Naive thymus-derived CD4-positive, alpha-beta T cell (primary cell): ENCODE measurements at regions of chr11 and their contacts with region 1.

Region 1: GRCh38 chr11:81869351-81870065 is 864.2 kb downstream of the FAM181B start:
- DNase-seq: peak in 8 of 9 donors; percentile 84 to 94 (median 92)
- ATAC-seq: peak; percentile 94
- H3K4me3 ChIP-seq: peak overlapping the region; percentile 48
- H3K4me3 Mint-ChIP-seq: peak overlapping the region; percentile 66 to 94 (median 78)
- H3K27ac ChIP-seq: peak overlapping the region; percentile 1
- H3K27ac Mint-ChIP-seq: peak overlapping the region; percentile 9 to 96 (median 92)
- H3K4me1 ChIP-seq: peaks cover 27 to 32% of the 10 kb centered on the region in 2 donors
- H3K4me1 Mint-ChIP-seq: peaks cover 35 to 70% (median 57%) of the 10 kb centered on the region in 7 donors
- H3K27me3 ChIP-seq: no peaks in the 10 kb centered on the region
- H3K27me3 Mint-ChIP-seq: peaks cover 0 to 24% (median 0%) of the 10 kb centered on the region in 5 donors

Region 2: GRCh38 chr11:81052344-81053158 is 817.0 kb before region 1 on chr11:
- CTCF ChIA-PET with region 1: no interaction called
- POLR2A ChIA-PET with region 1: no interaction called
- intact Hi-C with region 1: no loop called
- DNase-seq: no peak
- ATAC-seq: no peak
- H3K4me3 ChIP-seq: no peak overlapping the region
- H3K4me3 Mint-ChIP-seq: no peak overlapping the region
- H3K27ac ChIP-seq: no peak overlapping the region
- H3K27ac Mint-ChIP-seq: no peak overlapping the region
- H3K4me1 ChIP-seq: no peaks in the 10 kb centered on the region
- H3K4me1 Mint-ChIP-seq: no peaks in the 10 kb centered on the region
- H3K27me3 ChIP-seq: no peaks in the 10 kb centered on the region
- H3K27me3 Mint-ChIP-seq: no peaks in the 10 kb centered on the region

Region 3: DNA sequence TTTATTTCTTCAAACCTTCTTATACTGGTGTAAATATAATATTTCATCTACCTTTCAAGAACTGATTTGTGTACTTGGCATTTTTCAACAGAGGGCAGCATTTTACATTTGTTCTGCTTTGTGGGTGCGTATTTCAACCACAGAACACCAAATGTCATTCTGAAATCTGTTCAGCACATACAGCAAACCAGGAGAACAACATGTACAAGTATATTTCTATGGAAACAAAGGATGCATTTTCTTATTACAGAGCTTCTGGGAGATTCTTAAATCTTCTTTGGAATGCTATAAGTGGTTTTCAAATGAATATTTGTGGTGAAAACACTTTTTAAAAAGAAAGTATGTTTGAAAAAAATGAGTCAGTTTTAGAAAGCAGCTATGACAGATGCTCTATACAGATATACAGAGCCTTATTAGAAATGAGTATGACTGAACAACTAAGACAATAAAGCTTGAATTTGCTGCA is 81.9 kb before region 1 on chr11:
- CTCF ChIA-PET with region 1: no interaction called
- POLR2A ChIA-PET with region 1: no interaction called
- intact Hi-C with region 1: loop called (anchors 1 kb)
- DNase-seq: peak in 7 of 9 donors; percentile 11 to 54 (median 46)
- ATAC-seq: peak; percentile 48
- H3K4me3 ChIP-seq: no peak overlapping the region
- H3K4me3 Mint-ChIP-seq: no peak overlapping the region
- H3K27ac ChIP-seq: no peak overlapping the region
- H3K27ac Mint-ChIP-seq: peak overlapping the region in 1 of 9 donors; percentile 51
- H3K4me1 ChIP-seq: peaks cover 0 to 7% of the 10 kb centered on the region in 2 donors
- H3K4me1 Mint-ChIP-seq: peaks cover under 1 to 16% (median 9%) of the 10 kb centered on the region in 7 donors
- H3K27me3 ChIP-seq: no peaks in the 10 kb centered on the region
- H3K27me3 Mint-ChIP-seq: no peaks in the 10 kb centered on the region

Region 4: GRCh38 chr11:81857386-81857785 is 12.1 kb before region 1 on chr11:
- CTCF ChIA-PET with region 1: interaction called, 3 read pairs
- POLR2A ChIA-PET with region 1: no interaction called
- intact Hi-C with region 1: loop called in 1 of 2 experiments (anchors 1 kb)
- DNase-seq: no peak
- ATAC-seq: no peak
- H3K4me3 ChIP-seq: no peak overlapping the region
- H3K4me3 Mint-ChIP-seq: no peak overlapping the region
- H3K27ac ChIP-seq: no peak overlapping the region
- H3K27ac Mint-ChIP-seq: no peak overlapping the region
- H3K4me1 ChIP-seq: no peaks in the 10 kb centered on the region
- H3K4me1 Mint-ChIP-seq: peaks cover 0 to 10% (median 3%) of the 10 kb centered on the region in 7 donors
- H3K27me3 ChIP-seq: no peaks in the 10 kb centered on the region
- H3K27me3 Mint-ChIP-seq: peaks cover 0 to 12% (median 0%) of the 10 kb centered on the region in 5 donors

Region 5: GRCh38 chr11:81963018-81963417 is 93.5 kb after region 1 on chr11:
- CTCF ChIA-PET with region 1: no interaction called
- POLR2A ChIA-PET with region 1: no interaction called
- intact Hi-C with region 1: loop called (anchors 1 to 2 kb)
- DNase-seq: peak in 3 of 9 donors; percentile 4 to 10 (median 5)
- ATAC-seq: no peak
- H3K4me3 ChIP-seq: no peak overlapping the region
- H3K4me3 Mint-ChIP-seq: peak overlapping the region in 6 of 10 donors; percentile 37 to 62 (median 45)
- H3K27ac ChIP-seq: no peak overlapping the region
- H3K27ac Mint-ChIP-seq: no peak overlapping the region
- H3K4me1 ChIP-seq: peaks cover 0 to 8% of the 10 kb centered on the region in 2 donors
- H3K4me1 Mint-ChIP-seq: peaks cover 0 to 22% (median 16%) of the 10 kb centered on the region in 7 donors
- H3K27me3 ChIP-seq: no peaks in the 10 kb centered on the region
- H3K27me3 Mint-ChIP-seq: peaks cover 0 to 3% (median 0%) of the 10 kb centered on the region in 5 donors

Region 6: GRCh38 chr11:82239498-82239897 is 370.0 kb after region 1 on chr11:
- CTCF ChIA-PET with region 1: no interaction called
- POLR2A ChIA-PET with region 1: no interaction called
- intact Hi-C with region 1: loop called in 1 of 2 experiments (anchors 5 kb)
- DNase-seq: no peak
- ATAC-seq: no peak
- H3K4me3 ChIP-seq: no peak overlapping the region
- H3K4me3 Mint-ChIP-seq: no peak overlapping the region
- H3K27ac ChIP-seq: no peak overlapping the region
- H3K27ac Mint-ChIP-seq: no peak overlapping the region
- H3K4me1 ChIP-seq: no peaks in the 10 kb centered on the region
- H3K4me1 Mint-ChIP-seq: no peaks in the 10 kb centered on the region
- H3K27me3 ChIP-seq: no peaks in the 10 kb centered on the region
- H3K27me3 Mint-ChIP-seq: peaks cover 0 to 16% (median 10%) of the 10 kb centered on the region in 5 donors

Region 7: GRCh38 chr11:83285771-83286528 is 1416.4 kb after region 1 on chr11 and contains the start of gene CCDC90B:
- CTCF ChIA-PET with region 1: no interaction called
- POLR2A ChIA-PET with region 1: no interaction called
- intact Hi-C with region 1: loop called (anchors 1 to 10 kb)
- DNase-seq: peak; percentile 83 to 97 (median 96)
- ATAC-seq: peak; percentile 93
- H3K4me3 ChIP-seq: peak within 1 kb of the TSS; percentile 93
- H3K4me3 Mint-ChIP-seq: peak within 1 kb of the TSS; percentile 92 to 100 (median 98)
- H3K27ac ChIP-seq: peak within 1 kb of the TSS; percentile 95
- H3K27ac Mint-ChIP-seq: peak within 1 kb of the TSS; percentile 98 to 100 (median 99)
- H3K4me1 ChIP-seq: peaks cover 14 to 23% of the 10 kb centered on the region in 2 donors
- H3K4me1 Mint-ChIP-seq: peaks cover 19 to 52% (median 36%) of the 10 kb centered on the region in 7 donors
- H3K27me3 ChIP-seq: no peaks in the 10 kb centered on the region
- H3K27me3 Mint-ChIP-seq: peaks cover 0 to 11% (median 0%) of the 10 kb centered on the region in 5 donors
- total RNA-seq, gene CCDC90B: 19.1 to 40.8 (median 27.8) TPM